AG04450 (cell line): ENCODE measurements at regions of chr6 and their contacts with region 1.

Region 1: GRCh38 chr6:157967020-157967419 is 14.6 kb upstream of the SYNJ2 start:
- DNase-seq: no peak
- H3K4me3 ChIP-seq: no peak overlapping the region
- H3K27ac ChIP-seq: no peak overlapping the region
- H3K27me3 ChIP-seq: no peaks in the 10 kb centered on the region
- CTCF ChIP-seq: no peak

Region 2: DNA sequence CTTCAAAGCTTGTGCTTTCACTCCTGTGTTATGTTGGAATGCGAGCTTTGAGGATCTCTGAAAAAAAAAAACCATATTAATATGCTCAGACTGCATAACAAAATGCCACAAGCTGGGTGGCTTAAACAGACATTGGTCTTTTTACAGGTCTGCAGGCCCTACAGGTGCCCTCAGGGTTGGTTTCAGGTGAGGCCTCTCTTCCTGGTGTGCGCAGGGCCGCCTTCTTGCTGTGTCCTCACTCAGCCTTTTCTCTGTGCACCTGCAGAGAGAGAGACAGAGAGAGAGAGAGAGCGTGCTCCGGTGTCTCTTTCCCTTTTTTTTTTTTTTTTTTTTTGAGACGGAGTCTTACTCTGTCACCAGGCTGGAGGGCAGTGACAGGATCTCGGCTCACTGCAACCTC is 258.1 kb before region 1 on chr6:
- CTCF ChIA-PET with region 1: no interaction called
- POLR2A ChIA-PET with region 1: interaction called, 11 read pairs
- DNase-seq: no peak
- H3K4me3 ChIP-seq: no peak overlapping the region
- H3K27ac ChIP-seq: no peak overlapping the region
- H3K27me3 ChIP-seq: peaks cover 7% of the 10 kb centered on the region
- CTCF ChIP-seq: no peak

Region 3: GRCh38 chr6:157984686-157985225 is 17.7 kb after region 1 on chr6:
- CTCF ChIA-PET with region 1: no interaction called
- POLR2A ChIA-PET with region 1: no interaction called
- DNase-seq: no peak
- H3K4me3 ChIP-seq: peak overlapping the region; percentile 15
- H3K27ac ChIP-seq: no peak overlapping the region
- H3K27me3 ChIP-seq: no peaks in the 10 kb centered on the region
- CTCF ChIP-seq: no peak